Lower leg skin (tissue), 4 donors: ENCODE measurements at regions of chr17 and their contacts with region 1.

Region 1: DNA sequence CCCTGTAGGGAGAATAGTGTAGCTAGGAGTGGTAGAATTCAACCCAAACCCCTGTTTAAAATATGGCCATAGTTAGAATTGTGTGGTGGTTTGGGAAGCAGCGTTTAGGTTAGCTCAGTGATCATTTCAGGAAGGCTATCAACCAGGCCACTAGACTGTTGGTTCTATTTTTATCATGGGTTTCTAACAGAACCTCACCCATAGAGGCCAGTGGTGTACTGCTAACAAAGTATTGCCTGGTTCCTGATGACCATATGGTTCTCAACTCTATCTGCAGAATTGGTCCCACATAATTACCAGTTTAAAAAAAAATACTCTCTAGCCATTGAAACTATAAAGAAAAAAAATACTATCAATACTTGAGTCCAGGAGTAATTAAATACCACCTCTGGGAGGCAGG is 70.5 kb upstream of the RASL10B start:
- DNase-seq: no peak
- H3K4me3 ChIP-seq: no peak overlapping the region
- CTCF ChIP-seq: no peak
- POLR2A ChIP-seq: no peak

Region 2: GRCh38 chr17:35587074-35587971 is 73.6 kb before region 1 on chr17 and contains the start of gene AP2B1:
- intact Hi-C with region 1: no loop called
- DNase-seq: peak; percentile 95 to 99
- H3K4me3 ChIP-seq: peak within 1 kb of the TSS; percentile 79
- CTCF ChIP-seq: no peak
- POLR2A ChIP-seq: no peak
- total RNA-seq, gene AP2B1: 35.6 to 217 (median 39.7) TPM

Region 3: DNA sequence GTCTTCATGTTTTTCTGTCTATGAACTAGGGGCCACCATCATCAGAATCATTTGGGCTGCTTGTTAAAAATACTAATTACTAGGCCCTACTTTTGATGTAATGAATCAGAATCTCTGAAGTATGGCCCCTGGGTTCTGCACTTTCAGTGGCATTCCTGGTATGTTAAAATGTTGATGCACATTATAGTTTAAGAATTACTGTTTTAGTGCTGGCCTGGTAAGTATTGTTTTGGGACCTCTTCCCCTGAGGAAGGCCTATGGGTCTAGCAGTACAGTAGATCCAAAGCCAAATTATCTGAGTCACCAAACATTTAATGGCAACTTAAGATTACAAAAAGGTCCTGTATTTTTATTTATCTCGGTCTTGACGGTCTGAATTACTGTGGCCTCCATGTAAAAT is 15.0 kb before region 1 on chr17:
- intact Hi-C with region 1: loop called (anchors 2 kb)
- DNase-seq: no peak
- H3K4me3 ChIP-seq: no peak overlapping the region
- CTCF ChIP-seq: no peak
- POLR2A ChIP-seq: no peak

Region 4: DNA sequence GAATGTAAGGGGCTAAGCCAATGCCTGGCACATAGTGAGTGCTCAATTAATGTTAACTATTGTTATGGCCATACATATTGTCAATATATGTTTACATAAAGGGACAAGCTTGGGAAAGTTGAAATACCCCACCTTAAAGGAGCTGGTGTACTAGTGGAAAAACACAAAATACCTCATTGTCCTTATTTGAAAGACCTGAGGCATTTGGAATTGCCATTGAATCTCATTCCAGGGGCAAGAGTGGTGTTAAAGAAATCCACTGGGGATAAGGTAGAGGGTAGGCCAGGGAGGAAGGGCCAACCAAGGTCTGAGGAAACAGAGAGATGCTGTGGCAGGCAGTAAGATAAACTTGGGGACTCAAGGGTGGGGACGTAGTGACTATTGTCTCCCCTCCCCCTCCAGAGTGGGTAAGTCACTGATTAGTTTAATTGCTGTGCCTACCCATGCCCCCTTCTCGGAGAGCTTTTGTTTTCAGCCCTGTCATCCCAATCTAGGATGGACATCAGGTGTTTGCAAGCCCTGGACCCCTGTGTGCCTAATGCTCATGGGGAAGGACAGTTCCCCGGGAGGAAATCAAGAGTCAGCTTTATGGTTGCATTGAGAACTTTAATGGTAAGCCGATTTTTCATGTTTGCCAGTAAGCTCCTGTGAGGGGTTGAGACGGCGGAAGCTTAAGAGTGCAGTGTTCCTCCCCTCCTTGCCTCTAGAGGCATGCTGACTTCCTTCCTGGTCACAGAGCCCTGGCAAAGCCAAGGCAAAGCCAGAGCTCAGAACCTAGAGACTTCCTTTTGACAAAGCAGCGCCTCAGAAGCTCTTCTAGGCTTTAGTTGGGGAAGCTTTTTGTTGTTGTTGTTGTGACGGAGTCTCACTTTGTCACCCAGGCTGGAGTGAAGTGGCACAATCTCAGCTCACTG is 210.3 kb after region 1 on chr17:
- intact Hi-C with region 1: no loop called
- DNase-seq: no peak
- H3K4me3 ChIP-seq: no peak overlapping the region
- CTCF ChIP-seq: no peak
- POLR2A ChIP-seq: no peak